CD4-positive, alpha-beta memory T cell (primary cell): ENCODE measurements at regions of chr6 and their contacts with region 1.

Region 1: GRCh38 chr6:26473758-26474438 is 16.1 kb downstream of the BTN2A1 start:
- DNase-seq: peak; percentile 91 to 94 (median 92)
- H3K4me3 ChIP-seq: peak overlapping the region; percentile 63 to 73
- H3K4me3 Mint-ChIP-seq: peak overlapping the region; percentile 84 to 99 (median 94)
- H3K27ac ChIP-seq: peak overlapping the region; percentile 81
- H3K27ac Mint-ChIP-seq: peak overlapping the region; percentile 99 to 100 (median 99)
- H3K4me1 ChIP-seq: peaks cover 52% of the 10 kb centered on the region
- H3K4me1 Mint-ChIP-seq: peaks cover 37 to 72% (median 51%) of the 10 kb centered on the region in 4 donors
- H3K27me3 ChIP-seq: no peaks in the 10 kb centered on the region
- H3K27me3 Mint-ChIP-seq: no peaks in the 10 kb centered on the region

Region 2: DNA sequence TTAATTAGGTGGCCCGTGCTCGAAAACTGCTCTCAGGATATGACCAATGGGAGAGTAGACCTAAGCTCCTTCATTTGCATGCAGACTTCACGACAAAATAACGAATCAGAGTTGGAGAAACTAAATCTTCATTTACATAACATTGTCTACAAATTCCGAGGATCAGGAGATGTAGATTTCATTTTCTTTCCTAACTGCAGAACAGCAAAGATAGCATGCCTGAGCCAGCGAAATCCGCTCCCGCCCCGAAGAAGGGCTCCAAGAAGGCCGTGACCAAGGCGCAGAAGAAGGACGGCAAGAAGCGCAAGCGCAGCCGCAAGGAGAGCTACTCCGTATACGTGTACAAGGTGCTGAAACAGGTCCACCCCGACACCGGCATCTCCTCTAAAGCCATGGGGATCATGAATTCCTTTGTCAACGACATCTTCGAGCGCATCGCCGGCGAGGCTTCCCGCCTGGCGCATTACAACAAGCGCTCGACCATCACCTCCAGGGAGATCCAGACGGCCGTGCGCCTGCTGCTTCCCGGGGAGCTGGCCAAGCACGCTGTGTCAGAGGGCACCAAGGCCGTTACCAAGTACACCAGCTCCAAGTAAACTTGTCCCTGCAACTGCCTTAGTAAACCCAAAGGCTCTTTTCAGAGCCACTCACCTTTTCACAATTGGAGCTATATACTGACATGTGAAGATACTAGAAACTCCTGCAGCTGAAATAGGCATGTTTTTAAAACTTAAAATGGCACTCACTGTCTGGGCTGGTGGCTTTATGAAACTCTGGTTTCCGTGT is 290.1 kb before region 1 on chr6:
- CTCF ChIA-PET with region 1: no interaction called
- POLR2A ChIA-PET with region 1: interaction called, 14 read pairs
- intact Hi-C with region 1: no loop called
- DNase-seq: peak; percentile 72 to 81 (median 79)
- H3K4me3 ChIP-seq: peak overlapping the region; percentile 2 to 69
- H3K4me3 Mint-ChIP-seq: peak overlapping the region; percentile 90 to 100 (median 96)
- H3K27ac ChIP-seq: peak overlapping the region; percentile 67
- H3K27ac Mint-ChIP-seq: peak overlapping the region; percentile 78 to 99 (median 95)
- H3K4me1 ChIP-seq: peaks cover 45% of the 10 kb centered on the region
- H3K4me1 Mint-ChIP-seq: peaks cover 29 to 54% (median 37%) of the 10 kb centered on the region in 4 donors
- H3K27me3 ChIP-seq: no peaks in the 10 kb centered on the region
- H3K27me3 Mint-ChIP-seq: no peaks in the 10 kb centered on the region

Region 3: DNA sequence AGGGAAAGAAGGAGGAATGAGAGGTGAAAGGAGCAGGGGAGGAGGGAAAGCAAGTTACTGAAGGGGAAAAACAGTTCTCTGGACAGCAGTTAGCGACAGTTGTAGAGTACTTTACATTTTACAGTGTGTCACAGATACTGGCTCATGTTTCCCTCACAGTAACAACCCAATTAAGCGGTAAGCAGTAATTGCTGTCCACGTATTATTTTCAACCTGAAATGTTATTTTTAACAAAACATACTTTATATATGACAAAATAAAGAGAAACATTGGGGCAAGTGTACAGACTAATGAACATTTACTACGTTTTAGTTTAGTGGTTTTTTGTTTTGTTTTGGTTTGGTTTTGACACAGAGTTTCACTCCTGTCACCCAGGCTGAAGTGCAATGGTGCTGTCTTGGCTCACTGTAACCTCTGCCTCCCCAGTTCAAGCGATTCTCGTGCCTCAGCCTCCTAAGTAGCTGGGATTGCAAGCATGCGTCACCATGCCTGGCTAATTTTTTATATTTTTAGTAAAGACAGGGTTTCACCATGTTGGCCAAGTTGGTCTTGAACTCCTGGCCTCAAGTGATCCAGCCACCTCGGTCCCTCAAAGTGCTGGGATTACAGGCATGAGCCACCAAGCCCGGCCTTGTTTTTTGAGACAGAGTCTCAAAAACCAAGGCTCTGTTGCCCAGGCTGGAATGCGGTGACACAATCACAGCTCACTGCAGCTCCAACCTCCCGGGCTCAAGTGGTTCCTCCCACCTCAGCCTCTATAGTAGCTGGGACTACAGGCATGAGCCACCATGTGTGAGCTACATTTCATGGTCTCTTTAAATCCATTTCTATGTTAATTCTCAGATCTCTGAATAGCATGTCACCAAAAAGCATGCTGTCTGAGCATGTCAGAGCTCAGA is 131.5 kb before region 1 on chr6:
- CTCF ChIA-PET with region 1: interaction called, 6 read pairs
- POLR2A ChIA-PET with region 1: interaction called, 3 read pairs
- intact Hi-C with region 1: loop called (anchors 5 kb)
- DNase-seq: no peak
- H3K4me3 ChIP-seq: peak overlapping the region; percentile 39 to 40
- H3K4me3 Mint-ChIP-seq: peak overlapping the region; percentile 68 to 86 (median 86)
- H3K27ac ChIP-seq: no peak overlapping the region
- H3K27ac Mint-ChIP-seq: peak overlapping the region in 5 of 7 donors; percentile 42 to 91 (median 52)
- H3K4me1 ChIP-seq: peaks cover 11% of the 10 kb centered on the region
- H3K4me1 Mint-ChIP-seq: peaks cover 6 to 8% (median 7%) of the 10 kb centered on the region in 4 donors
- H3K27me3 ChIP-seq: no peaks in the 10 kb centered on the region
- H3K27me3 Mint-ChIP-seq: no peaks in the 10 kb centered on the region

Region 4: DNA sequence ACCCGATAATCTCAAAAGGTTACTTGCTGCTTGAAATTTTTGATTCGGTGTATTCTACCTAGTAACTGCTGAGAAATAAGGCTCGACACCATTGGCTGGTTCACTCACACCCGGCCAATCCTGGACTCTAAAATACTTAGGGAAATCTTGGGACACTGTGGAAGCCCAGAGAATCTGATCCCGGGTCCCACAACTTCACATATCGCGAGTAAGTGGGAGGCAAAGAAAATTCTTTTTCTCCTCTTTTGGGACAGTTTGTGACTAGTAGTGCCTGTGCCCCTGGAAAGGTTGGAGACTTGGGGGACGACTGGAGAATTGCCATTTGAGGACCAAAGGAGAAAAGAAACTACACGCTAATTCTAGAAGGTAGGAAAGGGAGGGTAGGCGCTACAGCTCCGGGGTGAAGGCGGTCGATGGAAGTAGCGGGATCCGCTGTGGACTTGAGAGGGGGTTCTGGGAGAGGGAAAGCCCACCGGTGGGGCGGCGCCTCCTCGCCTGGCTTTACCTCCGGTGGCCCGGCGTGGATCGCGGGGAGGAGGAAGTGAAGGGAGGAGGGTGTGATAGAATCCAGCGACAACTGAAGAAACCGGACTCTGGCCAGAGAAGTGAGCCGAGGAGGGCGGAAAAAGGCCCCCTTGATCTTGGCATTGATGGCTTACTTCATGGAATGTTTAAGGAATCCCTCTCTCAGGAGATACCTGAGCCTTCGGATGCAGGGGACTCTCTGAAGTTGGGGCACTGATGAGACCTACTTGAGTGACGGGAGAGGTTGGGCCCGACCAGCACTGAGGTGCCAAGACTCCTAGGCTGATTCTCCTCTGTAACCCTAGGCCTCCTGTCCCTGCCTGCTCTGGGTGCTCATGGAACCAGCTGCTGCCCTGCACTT is 52.4 kb before region 1 on chr6:
- CTCF ChIA-PET with region 1: no interaction called
- POLR2A ChIA-PET with region 1: interaction called, 4 read pairs
- intact Hi-C with region 1: loop called (anchors 2 kb)
- DNase-seq: peak; percentile 63 to 69 (median 67)
- H3K4me3 ChIP-seq: peak overlapping the region; percentile 86 to 97
- H3K4me3 Mint-ChIP-seq: no peak overlapping the region
- H3K27ac ChIP-seq: peak overlapping the region; percentile 65
- H3K27ac Mint-ChIP-seq: peak overlapping the region in 1 of 7 donors; percentile 90
- H3K4me1 ChIP-seq: peaks cover 10% of the 10 kb centered on the region
- H3K4me1 Mint-ChIP-seq: peaks cover 2 to 12% (median 5%) of the 10 kb centered on the region in 4 donors
- H3K27me3 ChIP-seq: no peaks in the 10 kb centered on the region
- H3K27me3 Mint-ChIP-seq: no peaks in the 10 kb centered on the region

Region 5: GRCh38 chr6:26457806-26458688 is 15.9 kb before region 1 on chr6 and contains the start of gene BTN2A1:
- CTCF ChIA-PET with region 1: interaction called, 4 read pairs
- POLR2A ChIA-PET with region 1: interaction called, 28 read pairs
- intact Hi-C with region 1: loop called (anchors 1 kb)
- DNase-seq: peak; percentile 76 to 86 (median 78)
- H3K4me3 ChIP-seq: peak within 1 kb of the TSS; percentile 90 to 95
- H3K4me3 Mint-ChIP-seq: peak within 1 kb of the TSS; percentile 96 to 100 (median 98)
- H3K27ac ChIP-seq: peak within 1 kb of the TSS; percentile 85
- H3K27ac Mint-ChIP-seq: peak within 1 kb of the TSS; percentile 91 to 99 (median 98)
- H3K4me1 ChIP-seq: peaks cover 47% of the 10 kb centered on the region
- H3K4me1 Mint-ChIP-seq: peaks cover 45 to 73% (median 57%) of the 10 kb centered on the region in 4 donors
- H3K27me3 ChIP-seq: no peaks in the 10 kb centered on the region
- H3K27me3 Mint-ChIP-seq: no peaks in the 10 kb centered on the region
- total RNA-seq, gene BTN2A1: 57.0 to 62.8 TPM

Region 6: DNA sequence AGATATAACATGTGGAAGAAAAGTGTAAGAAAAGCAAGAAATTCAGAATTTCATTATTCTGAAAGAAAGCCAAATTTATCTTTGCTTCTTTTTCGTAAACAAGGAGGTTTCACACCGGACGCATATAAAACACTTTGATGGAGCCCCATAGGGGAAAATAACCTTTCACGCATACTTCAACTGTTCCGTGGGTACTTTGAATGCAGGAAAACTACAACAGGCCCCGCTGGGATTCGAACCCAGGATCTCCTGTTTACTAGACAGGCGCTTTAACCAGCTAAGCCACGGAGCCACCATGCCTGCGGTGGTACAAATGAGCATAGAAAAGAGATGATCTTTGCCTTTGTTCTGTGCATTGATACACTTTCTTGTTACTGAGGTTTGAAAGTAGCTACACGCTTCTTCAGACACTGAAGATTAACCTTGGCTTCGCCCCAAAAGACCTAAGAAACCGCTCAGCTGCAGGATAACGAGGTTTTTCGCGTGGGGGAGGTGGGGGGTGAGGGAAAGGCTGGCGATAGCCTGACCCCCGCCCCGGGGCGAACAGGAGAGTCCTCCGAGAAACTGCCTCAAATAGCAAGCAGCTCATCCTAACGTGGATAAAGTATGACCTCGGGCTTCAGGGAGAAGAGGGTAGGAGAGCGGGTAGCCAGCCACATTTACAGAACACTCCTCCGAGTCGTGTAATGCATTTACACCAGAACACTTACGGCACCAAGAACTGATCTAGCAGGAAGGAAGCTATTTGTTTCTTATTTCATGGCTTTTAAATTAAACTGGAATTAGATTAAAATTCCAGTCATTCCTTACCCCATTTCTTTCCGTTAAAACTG is 59.0 kb after region 1 on chr6:
- CTCF ChIA-PET with region 1: interaction called, 15 read pairs
- POLR2A ChIA-PET with region 1: interaction called, 108 read pairs
- intact Hi-C with region 1: loop called (anchors 1 kb)
- DNase-seq: peak; percentile 90 to 94 (median 91)
- H3K4me3 ChIP-seq: peak overlapping the region; percentile 86 to 93
- H3K4me3 Mint-ChIP-seq: peak overlapping the region; percentile 94 to 99 (median 96)
- H3K27ac ChIP-seq: peak overlapping the region; percentile 74
- H3K27ac Mint-ChIP-seq: peak overlapping the region; percentile 91 to 99 (median 96)
- H3K4me1 ChIP-seq: peaks cover 41% of the 10 kb centered on the region
- H3K4me1 Mint-ChIP-seq: peaks cover 33 to 51% (median 40%) of the 10 kb centered on the region in 4 donors
- H3K27me3 ChIP-seq: no peaks in the 10 kb centered on the region
- H3K27me3 Mint-ChIP-seq: peaks cover 6 to 9% of the 10 kb centered on the region in 2 donors